ENCODE measurements at regions of chr15 and their contacts with region 1.

Region 1: DNA sequence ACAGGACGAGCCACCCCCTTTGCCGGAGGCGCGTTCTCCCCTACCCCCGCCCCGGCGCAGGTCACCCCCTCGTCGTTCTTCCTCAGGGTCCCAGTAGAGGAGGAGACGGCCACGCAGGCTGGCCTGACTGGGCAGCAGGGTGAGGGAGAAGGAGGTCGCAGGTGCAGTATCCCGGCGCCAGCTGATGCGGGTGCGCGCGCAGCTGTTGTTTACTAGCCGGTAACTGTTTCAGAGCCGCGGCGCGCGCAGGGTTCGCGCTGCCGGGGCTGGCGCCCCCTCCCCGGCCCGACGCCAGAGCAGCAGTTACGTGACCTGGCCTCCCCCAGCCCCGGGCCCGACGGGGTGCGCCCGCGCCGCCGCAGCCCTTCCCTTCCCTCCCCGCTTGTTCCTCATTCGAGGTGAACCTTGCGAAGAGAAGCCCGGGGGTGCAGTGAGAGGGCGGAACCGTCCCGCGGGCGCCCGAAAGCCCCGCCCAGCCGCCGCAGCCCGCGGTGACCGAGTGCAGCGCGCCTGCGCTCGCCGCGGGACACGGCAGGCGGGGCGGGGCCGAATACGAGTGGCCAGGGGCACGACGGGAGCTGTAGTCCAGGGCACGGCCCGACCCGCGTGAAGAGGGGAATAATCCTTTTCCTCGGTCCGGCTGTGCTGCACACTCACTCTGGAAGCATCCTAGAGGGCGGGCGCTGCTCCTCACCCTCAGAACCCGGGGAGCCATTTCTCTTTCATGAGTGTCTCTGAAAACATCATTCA is at the start of gene SLC12A6:
- DNase-seq: peak; percentile 92
- H3K4me3 Mint-ChIP-seq: peak within 1 kb of the TSS; percentile 95
- H3K27ac Mint-ChIP-seq: peak within 1 kb of the TSS; percentile 88
- H3K4me1 Mint-ChIP-seq: peaks cover 68% of the 10 kb centered on the region
- H3K27me3 Mint-ChIP-seq: no peaks in the 10 kb centered on the region
- total RNA-seq, gene SLC12A6: 18.4 to 18.5 TPM

Region 2: GRCh38 chr15:34101366-34102175 is 236.2 kb before region 1 on chr15 and contains the starts of genes EMC7 and PGBD4:
- CTCF ChIA-PET with region 1: no interaction called
- POLR2A ChIA-PET with region 1: no interaction called
- intact Hi-C with region 1: loop called (anchors 2 kb)
- DNase-seq: peak; percentile 100
- H3K4me3 Mint-ChIP-seq: peak within 1 kb of the TSS; percentile 99
- H3K27ac Mint-ChIP-seq: peak within 1 kb of the TSS; percentile 96
- H3K4me1 Mint-ChIP-seq: peaks cover 36% of the 10 kb centered on the region
- H3K27me3 Mint-ChIP-seq: no peaks in the 10 kb centered on the region
- total RNA-seq, gene EMC7: 62.7 to 68.4 TPM
- total RNA-seq, gene PGBD4: 2.0 to 2.3 TPM

Region 3: DNA sequence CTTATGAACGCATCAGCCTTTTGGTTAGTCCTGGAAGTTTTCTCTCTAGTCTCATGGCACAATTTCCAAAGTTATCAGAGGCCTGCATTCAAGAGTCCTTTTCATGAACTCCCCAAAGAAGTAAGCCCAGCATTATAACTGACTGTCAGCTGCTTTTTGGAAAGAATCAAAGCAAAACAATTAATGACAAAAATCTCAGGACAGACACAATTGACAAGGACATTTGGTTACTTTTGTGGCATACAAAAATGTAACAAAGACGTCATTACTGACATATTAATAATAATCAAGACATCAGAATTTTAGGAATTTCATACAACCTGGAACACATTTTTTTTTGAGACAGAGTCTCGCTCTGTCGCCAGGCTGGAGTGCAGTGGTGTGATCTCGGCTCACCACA is 149.0 kb before region 1 on chr15:
- CTCF ChIA-PET with region 1: no interaction called
- POLR2A ChIA-PET with region 1: no interaction called
- intact Hi-C with region 1: no loop called
- DNase-seq: no peak
- H3K4me3 Mint-ChIP-seq: no peak overlapping the region
- H3K27ac Mint-ChIP-seq: no peak overlapping the region
- H3K4me1 Mint-ChIP-seq: peaks cover 7% of the 10 kb centered on the region
- H3K27me3 Mint-ChIP-seq: no peaks in the 10 kb centered on the region

Region 4: DNA sequence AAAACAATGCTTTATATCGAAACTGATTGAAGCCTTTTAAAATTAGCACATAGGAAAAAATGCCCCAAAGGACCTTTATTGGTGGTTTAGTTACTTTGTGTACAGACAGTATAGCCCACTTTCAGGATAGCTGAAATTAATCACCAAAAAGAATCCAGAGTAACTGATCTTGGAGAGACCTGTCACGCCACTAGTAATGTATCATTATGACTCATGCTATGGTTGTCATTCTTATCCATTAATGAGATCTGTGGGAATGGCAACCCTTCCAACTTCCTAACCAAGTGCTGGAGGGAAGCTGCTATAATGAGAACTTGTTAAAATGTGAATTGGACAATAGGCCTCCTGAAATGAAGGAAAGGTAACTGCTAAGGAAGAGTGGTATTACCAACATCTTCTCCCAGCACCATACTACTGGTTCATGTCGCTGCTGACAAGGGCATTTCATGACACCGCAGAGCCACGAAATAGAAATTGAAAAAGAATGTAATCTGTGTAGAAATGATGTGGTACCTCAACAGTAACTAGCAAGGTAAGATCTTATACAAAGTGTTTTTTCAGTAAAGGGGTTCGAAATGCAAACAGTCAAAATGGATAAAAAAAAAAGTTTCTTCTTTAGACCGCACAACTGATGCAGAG is 120.0 kb before region 1 on chr15:
- CTCF ChIA-PET with region 1: no interaction called
- POLR2A ChIA-PET with region 1: no interaction called
- intact Hi-C with region 1: no loop called
- DNase-seq: no peak
- H3K4me3 Mint-ChIP-seq: no peak overlapping the region
- H3K27ac Mint-ChIP-seq: no peak overlapping the region
- H3K4me1 Mint-ChIP-seq: no peaks in the 10 kb centered on the region
- H3K27me3 Mint-ChIP-seq: no peaks in the 10 kb centered on the region

Region 5: DNA sequence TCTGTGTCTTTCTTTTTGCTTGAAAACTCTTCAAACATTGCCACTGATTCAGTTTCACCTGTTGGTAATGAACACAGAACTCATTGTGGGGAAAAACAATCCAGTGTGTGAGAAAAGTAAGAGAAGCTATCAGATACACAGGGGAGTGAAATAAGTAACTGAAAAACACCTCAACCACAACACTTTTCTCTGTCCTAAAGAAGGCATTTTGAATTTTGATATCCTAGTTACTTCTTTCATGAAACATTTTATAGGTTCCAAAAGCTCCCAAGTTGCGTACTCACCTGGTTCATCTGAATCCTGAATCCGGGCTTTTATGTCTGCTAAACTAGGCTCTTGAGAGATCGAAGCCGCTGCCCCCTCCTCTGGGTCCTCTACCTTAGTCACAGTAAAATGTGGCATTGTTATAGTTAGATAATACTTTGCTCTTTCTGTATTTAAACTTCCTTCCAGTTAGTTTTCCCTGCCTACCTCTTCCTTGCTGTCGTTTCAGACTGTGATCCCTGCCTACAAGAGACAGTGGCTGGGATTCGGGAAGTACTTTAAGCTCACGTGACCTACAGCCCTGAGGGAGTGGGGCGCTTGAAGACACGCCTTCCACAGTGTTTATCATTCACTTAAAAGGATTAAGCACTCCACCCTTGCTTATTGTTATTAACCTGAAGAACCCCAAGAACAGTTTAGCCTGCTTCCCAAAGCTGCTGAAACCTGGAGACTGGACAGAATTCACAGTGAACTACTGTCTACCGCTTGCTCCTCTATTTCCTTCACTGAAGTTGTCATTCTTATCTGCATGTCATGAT is 19.3 kb before region 1 on chr15:
- CTCF ChIA-PET with region 1: no interaction called
- POLR2A ChIA-PET with region 1: interaction called, 4 read pairs
- intact Hi-C with region 1: loop called (anchors 2 kb)
- DNase-seq: peak; percentile 38
- H3K4me3 Mint-ChIP-seq: peak overlapping the region; percentile 96
- H3K27ac Mint-ChIP-seq: peak overlapping the region; percentile 88
- H3K4me1 Mint-ChIP-seq: peaks cover 36% of the 10 kb centered on the region
- H3K27me3 Mint-ChIP-seq: no peaks in the 10 kb centered on the region

Region 6: DNA sequence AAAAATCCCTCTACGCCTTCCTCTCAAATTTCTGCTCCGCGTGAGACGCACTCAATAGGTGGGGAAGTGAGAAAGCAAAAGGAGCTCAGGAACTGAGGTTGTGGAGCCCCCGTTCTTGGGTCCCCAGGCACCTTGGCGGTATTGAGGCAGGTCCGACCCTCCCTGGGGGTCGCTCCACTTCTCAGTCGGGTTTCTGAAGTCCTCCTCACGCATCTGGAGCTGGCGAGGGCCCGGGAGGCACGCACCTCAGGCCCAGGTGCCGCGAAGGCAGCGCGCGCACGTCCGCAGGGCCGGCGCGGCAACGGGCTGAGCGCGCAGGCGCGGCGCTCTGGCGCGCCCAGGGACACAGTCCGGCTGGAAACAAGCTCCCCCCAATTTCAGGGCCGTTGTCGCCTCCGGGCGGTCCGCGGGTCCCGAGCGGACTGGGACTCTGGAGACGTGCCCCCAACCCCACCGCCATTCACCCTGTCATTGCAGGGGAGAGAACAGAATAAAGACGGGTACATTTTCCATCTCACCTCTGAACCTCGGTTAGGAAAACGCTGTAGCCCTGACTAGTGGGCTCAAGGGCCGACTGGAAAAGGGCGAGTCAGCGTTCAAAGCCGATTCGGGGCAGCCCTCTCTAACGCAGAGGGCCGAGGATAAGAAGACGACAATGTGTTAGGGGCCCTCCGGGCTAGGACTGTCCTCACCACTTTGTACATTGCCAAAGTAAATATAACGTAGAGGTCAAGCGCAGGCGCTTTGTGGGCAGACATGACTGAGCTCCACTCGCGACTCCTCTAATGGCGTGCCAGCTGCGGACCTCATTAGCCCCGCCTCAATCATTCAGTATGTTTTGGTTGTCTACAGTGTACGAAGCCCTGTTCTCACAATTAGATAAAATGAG is 650.5 kb after region 1 on chr15 and contains the start of gene ZNF770:
- CTCF ChIA-PET with region 1: no interaction called
- POLR2A ChIA-PET with region 1: no interaction called
- intact Hi-C with region 1: loop called (anchors 5 kb)
- DNase-seq: peak; percentile 90
- H3K4me3 Mint-ChIP-seq: peak within 1 kb of the TSS; percentile 97
- H3K27ac Mint-ChIP-seq: peak within 1 kb of the TSS; percentile 100
- H3K4me1 Mint-ChIP-seq: peaks cover 36% of the 10 kb centered on the region
- H3K27me3 Mint-ChIP-seq: no peaks in the 10 kb centered on the region
- total RNA-seq, gene ZNF770: 36.6 to 38.5 TPM